Caco-2 (cell line): ENCODE measurements at regions of chr19 and their contacts with region 1.

Region 1: GRCh38 chr19:50461066-50461875 is 15.0 kb upstream of the EMC10 start:
- DNase-seq: peak; percentile 79 to 83
- H3K4me3 ChIP-seq: no peak overlapping the region
- H3K4me3 Mint-ChIP-seq: peak overlapping the region; percentile 33
- H3K27ac Mint-ChIP-seq: peak overlapping the region; percentile 56
- H3K4me1 ChIP-seq: peaks cover 21% of the 10 kb centered on the region
- H3K4me1 Mint-ChIP-seq: peaks cover 7% of the 10 kb centered on the region
- H3K27me3 ChIP-seq: no peaks in the 10 kb centered on the region
- H3K27me3 Mint-ChIP-seq: no peaks in the 10 kb centered on the region
- CTCF ChIP-seq: peak; percentile 89 to 91

Region 2: DNA sequence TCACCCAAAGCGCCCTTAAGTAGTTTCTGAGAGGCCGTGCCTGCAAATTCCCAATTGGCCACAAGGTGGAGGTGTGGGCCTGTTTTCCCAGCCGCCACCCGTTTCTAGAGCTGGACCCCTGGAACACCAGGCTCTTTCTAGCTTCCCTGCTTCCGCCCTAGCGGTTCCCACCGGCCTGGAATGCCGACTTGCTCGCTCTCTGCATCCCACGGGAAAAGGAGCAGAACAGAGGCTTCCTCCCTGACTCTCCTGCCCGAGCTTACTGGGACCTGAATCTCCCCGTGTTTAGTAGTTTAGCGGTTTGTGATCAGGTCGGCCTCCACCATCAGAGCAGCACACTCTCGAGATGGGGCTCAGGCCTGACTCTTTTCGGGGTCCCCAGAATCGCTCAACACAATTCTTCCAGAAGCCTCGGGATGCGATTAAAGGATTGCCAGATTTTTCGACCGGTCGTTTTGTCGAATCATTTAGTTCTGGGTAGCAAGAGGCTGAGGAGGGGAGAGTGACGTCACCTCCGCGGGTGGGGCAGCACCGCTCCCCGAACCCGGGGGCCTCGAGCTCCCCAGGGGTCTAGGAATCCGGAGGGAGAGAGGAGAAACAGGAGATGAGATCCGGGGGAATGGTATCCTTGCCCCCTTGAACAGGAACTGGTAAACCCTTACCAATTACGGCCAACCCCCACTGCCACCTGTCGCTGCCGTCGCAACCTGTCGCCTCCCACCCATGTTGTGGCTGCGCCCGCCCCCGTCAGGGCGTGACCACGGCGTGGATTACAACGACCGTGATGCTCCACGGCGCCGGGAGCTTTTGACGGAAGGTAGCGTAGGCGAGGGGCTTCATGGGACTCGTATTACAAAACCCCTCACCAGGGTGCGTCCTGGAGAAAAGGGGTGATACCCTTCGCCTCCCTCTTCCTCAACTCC is 103.8 kb before region 1 on chr19:
- CTCF ChIA-PET with region 1: interaction called, 21 read pairs
- POLR2A ChIA-PET with region 1: no interaction called
- intact Hi-C with region 1: loop called (anchors 1 kb)
- DNase-seq: peak; percentile 71 to 82
- H3K4me3 ChIP-seq: peak overlapping the region; percentile 36
- H3K4me3 Mint-ChIP-seq: peak overlapping the region; percentile 68
- H3K27ac Mint-ChIP-seq: no peak overlapping the region
- H3K4me1 ChIP-seq: no peaks in the 10 kb centered on the region
- H3K4me1 Mint-ChIP-seq: no peaks in the 10 kb centered on the region
- H3K27me3 ChIP-seq: no peaks in the 10 kb centered on the region
- H3K27me3 Mint-ChIP-seq: no peaks in the 10 kb centered on the region
- CTCF ChIP-seq: peak; percentile 83 to 94

Region 3: DNA sequence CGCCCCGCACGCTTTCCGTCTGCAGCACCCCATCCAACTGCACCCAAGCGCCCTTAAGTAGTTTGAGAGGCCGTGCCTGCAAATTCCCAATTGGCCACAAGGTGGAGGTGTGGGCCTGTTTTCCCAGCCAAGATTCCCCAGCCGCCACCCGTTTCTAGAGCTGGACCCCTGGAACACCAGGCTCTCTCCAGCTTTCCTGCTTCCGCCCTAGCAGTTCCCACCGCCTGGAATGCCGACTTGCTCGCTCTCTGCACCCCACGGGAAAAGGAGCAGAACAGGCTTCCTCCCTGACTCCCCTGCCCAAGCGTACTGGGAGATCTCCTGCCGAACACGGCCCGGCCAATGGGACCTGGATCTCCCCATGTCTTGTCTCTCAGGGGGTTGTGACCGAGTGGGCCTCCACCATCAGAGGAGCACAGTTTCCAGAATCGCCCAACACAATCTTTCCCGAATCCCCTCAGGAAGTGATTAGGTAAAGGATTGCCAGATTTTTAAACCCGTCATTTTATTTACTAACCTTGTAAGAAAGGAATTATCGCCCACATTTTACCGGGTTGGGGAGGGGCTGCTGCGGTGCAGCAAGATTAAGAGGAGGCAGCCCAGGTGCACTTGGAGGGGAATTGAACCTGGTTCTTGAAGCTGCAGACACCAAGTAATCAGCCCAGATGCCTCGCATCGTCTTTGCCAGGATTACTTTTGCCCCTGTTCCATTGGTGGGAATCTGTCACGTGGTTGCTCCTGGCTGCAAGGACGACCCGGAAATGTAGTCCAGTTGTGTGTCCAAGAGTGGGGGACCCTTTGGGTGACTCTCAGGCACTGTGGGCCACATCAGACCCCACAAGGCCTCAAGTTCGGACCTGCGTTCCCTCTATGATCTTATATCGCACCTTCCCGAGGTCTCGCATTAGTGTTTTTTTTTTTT is 92.4 kb before region 1 on chr19:
- CTCF ChIA-PET with region 1: interaction called, 44 read pairs
- POLR2A ChIA-PET with region 1: interaction called, 4 read pairs
- intact Hi-C with region 1: loop called (anchors 1 kb)
- DNase-seq: peak; percentile 82 to 88
- H3K4me3 ChIP-seq: peak overlapping the region; percentile 36
- H3K4me3 Mint-ChIP-seq: peak overlapping the region; percentile 77
- H3K27ac Mint-ChIP-seq: peak overlapping the region; percentile 85
- H3K4me1 ChIP-seq: no peaks in the 10 kb centered on the region
- H3K4me1 Mint-ChIP-seq: peaks cover 9% of the 10 kb centered on the region
- H3K27me3 ChIP-seq: no peaks in the 10 kb centered on the region
- H3K27me3 Mint-ChIP-seq: peaks cover 3% of the 10 kb centered on the region
- CTCF ChIP-seq: peak; percentile 84 to 92

Region 4: GRCh38 chr19:50376166-50377050 is 84.9 kb before region 1 on chr19 and contains the start of gene NR1H2:
- CTCF ChIA-PET with region 1: interaction called, 7 read pairs
- POLR2A ChIA-PET with region 1: interaction called, 10 read pairs
- intact Hi-C with region 1: loop called (anchors 2 kb)
- DNase-seq: peak; percentile 95 to 96
- H3K4me3 ChIP-seq: peak within 1 kb of the TSS; percentile 72
- H3K4me3 Mint-ChIP-seq: peak within 1 kb of the TSS; percentile 99
- H3K27ac Mint-ChIP-seq: peak within 1 kb of the TSS; percentile 100
- H3K4me1 ChIP-seq: no peaks in the 10 kb centered on the region
- H3K4me1 Mint-ChIP-seq: no peaks in the 10 kb centered on the region
- H3K27me3 ChIP-seq: no peaks in the 10 kb centered on the region
- H3K27me3 Mint-ChIP-seq: no peaks in the 10 kb centered on the region
- CTCF ChIP-seq: no peak
- total RNA-seq, gene NR1H2: 38.3 and 40.3 TPM in 2 replicates

Region 5: DNA sequence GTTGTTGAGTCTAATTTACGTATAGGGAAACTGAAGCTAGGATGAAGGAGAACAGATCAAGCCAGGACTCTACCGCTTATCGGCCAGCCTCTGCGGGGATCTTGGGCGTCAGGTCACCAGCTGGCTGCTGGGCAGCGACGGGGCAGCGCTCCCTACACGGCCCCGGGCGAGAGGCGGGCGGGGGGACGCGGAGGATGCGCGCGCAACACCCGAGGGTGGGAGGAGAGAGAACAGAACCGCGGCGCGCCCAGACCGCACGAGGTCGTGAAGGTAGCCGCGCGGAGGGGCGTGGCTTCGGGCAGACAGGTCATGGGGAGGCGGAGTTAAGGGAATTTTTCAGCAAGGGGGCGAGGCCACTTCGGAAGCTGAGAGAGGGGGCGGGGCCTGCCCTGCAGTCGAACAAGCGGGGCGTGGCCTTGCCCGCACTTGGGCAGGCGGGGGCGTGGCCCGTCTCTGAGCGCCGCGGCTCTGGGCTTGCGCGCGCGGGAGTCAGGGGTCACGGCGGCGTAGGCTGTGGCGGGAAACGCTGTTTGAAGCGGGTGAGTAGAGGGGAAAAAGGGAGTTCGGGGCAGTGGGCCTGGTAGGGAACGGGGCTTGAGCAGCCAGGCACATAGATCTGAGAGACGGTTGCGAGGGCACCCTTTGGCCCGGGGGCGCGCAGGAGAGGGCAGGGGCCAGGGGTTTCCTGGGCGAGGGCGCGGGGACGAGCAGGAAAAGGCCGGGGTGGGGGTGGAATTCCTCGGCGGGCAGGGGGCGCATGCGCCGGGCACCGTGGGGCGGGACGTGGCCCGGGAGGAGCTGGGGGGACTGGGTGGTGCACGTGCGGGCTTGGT is 77.2 kb before region 1 on chr19 and contains the start of gene POLD1:
- CTCF ChIA-PET with region 1: interaction called, 15 read pairs
- POLR2A ChIA-PET with region 1: interaction called, 18 read pairs
- intact Hi-C with region 1: no loop called
- DNase-seq: peak; percentile 99 to 100
- H3K4me3 ChIP-seq: peak within 1 kb of the TSS; percentile 72
- H3K4me3 Mint-ChIP-seq: peak within 1 kb of the TSS; percentile 86
- H3K27ac Mint-ChIP-seq: peak within 1 kb of the TSS; percentile 91
- H3K4me1 ChIP-seq: peaks cover 6% of the 10 kb centered on the region; the same call in 1 of the 2 replicates
- H3K4me1 Mint-ChIP-seq: peaks cover 10% of the 10 kb centered on the region
- H3K27me3 ChIP-seq: no peaks in the 10 kb centered on the region
- H3K27me3 Mint-ChIP-seq: no peaks in the 10 kb centered on the region
- CTCF ChIP-seq: no peak
- total RNA-seq, gene POLD1: 128 TPM in 2 replicates

Region 6: GRCh38 chr19:50414864-50415660 is 46.2 kb before region 1 on chr19:
- CTCF ChIA-PET with region 1: interaction called, 6 read pairs
- POLR2A ChIA-PET with region 1: interaction called, 3 read pairs
- intact Hi-C with region 1: loop called (anchors 2 kb)
- DNase-seq: peak; percentile 69 to 78
- H3K4me3 ChIP-seq: no peak overlapping the region
- H3K4me3 Mint-ChIP-seq: no peak overlapping the region
- H3K27ac Mint-ChIP-seq: no peak overlapping the region
- H3K4me1 ChIP-seq: peaks cover 16% of the 10 kb centered on the region
- H3K4me1 Mint-ChIP-seq: peaks cover 11% of the 10 kb centered on the region
- H3K27me3 ChIP-seq: no peaks in the 10 kb centered on the region
- H3K27me3 Mint-ChIP-seq: no peaks in the 10 kb centered on the region
- CTCF ChIP-seq: peak; percentile 75 to 78

Region 7: DNA sequence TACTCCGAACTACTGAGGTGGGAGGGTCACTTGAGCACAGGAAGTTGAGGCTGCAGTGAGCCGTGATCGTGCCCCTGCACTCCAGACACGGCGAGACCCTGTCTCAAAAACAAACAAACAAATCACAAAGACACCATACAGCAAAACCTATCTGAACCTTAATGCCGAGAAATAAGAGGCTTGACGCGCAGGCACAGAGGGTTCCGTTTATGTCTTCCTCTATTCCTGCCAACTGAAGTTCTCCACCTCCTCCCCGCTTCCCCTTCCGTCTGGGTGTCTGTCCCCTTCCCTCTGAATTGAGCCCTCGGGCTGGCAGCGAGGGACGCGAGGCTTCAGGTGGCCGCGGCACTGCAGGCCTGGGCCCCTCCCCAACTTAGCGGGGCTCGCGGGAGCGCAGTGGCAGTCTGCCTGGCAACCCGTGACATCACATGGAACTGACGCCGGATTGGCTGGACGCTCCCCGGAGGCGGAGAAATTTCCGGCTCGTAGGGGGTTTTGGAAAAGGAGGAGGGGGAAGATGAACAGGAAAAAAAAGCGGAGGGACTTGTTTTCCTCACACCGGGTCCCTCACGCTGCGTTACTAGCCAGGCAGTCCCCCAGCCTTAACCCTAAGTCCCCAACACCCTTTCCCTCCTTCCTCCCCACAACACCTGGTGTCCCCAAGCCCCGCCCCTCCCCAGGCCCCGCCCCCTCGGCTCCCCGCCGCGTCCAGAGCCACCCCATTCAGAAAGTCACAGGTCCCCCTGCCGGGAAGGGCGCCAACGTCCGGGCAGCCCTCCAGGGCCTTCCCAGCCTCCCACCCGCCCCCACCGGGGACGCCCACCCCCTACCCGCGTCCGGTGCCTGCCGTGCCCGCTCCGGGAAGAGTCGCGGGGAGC is 29.7 kb before region 1 on chr19:
- CTCF ChIA-PET with region 1: interaction called, 6 read pairs
- POLR2A ChIA-PET with region 1: no interaction called
- intact Hi-C with region 1: loop called (anchors 1 kb)
- DNase-seq: peak; percentile 89 to 95
- H3K4me3 ChIP-seq: peak overlapping the region; percentile 51
- H3K4me3 Mint-ChIP-seq: peak overlapping the region; percentile 94
- H3K27ac Mint-ChIP-seq: peak overlapping the region; percentile 74
- H3K4me1 ChIP-seq: peaks cover 11% of the 10 kb centered on the region
- H3K4me1 Mint-ChIP-seq: peaks cover 7% of the 10 kb centered on the region
- H3K27me3 ChIP-seq: no peaks in the 10 kb centered on the region
- H3K27me3 Mint-ChIP-seq: peaks cover 6% of the 10 kb centered on the region
- CTCF ChIP-seq: peak in 1 of 2 experiments; percentile 13